ENCODE measurements at regions of chr10 and their contacts with region 1.

Region 1: GRCh38 chr10:60444494-60445064 is 54.9 kb upstream of the ANK3 start:
- DNase-seq: no peak
- ATAC-seq: no peak
- H3K4me3 ChIP-seq: no peak overlapping the region
- H3K27ac ChIP-seq: no peak overlapping the region
- H3K4me1 ChIP-seq: peaks cover 13% of the 10 kb centered on the region
- H3K27me3 ChIP-seq: no peaks in the 10 kb centered on the region
- CTCF ChIP-seq: peak; percentile 72; the same call in 1 of the 2 replicates

Region 2: GRCh38 chr10:58886406-58886805 is 1558.2 kb before region 1 on chr10:
- CTCF ChIA-PET with region 1: no interaction called
- POLR2A ChIA-PET with region 1: no interaction called
- in situ Hi-C with region 1: no loop called
- intact Hi-C with region 1: no loop called
- DNase-seq: no peak
- ATAC-seq: no peak
- H3K4me3 ChIP-seq: no peak overlapping the region
- H3K27ac ChIP-seq: no peak overlapping the region
- H3K4me1 ChIP-seq: no peaks in the 10 kb centered on the region
- H3K27me3 ChIP-seq: no peaks in the 10 kb centered on the region
- CTCF ChIP-seq: no peak

Region 3: GRCh38 chr10:60208676-60209269 is 235.8 kb before region 1 on chr10:
- CTCF ChIA-PET with region 1: interaction called, 11 read pairs
- POLR2A ChIA-PET with region 1: no interaction called
- in situ Hi-C with region 1: no loop called
- intact Hi-C with region 1: no loop called
- DNase-seq: peak; percentile 25
- ATAC-seq: no peak
- H3K4me3 ChIP-seq: no peak overlapping the region
- H3K27ac ChIP-seq: no peak overlapping the region
- H3K4me1 ChIP-seq: no peaks in the 10 kb centered on the region
- H3K27me3 ChIP-seq: peaks cover 3% of the 10 kb centered on the region; the same call in 1 of the 2 replicates
- CTCF ChIP-seq: peak; percentile 76; the same call in 1 of the 2 replicates

Region 4: GRCh38 chr10:60646966-60647796 is 202.6 kb after region 1 on chr10:
- CTCF ChIA-PET with region 1: interaction called, 9 read pairs
- POLR2A ChIA-PET with region 1: no interaction called
- in situ Hi-C with region 1: no loop called
- intact Hi-C with region 1: loop called (anchors 1 kb)
- DNase-seq: peak; percentile 42
- ATAC-seq: peak; percentile 76
- H3K4me3 ChIP-seq: no peak overlapping the region
- H3K27ac ChIP-seq: no peak overlapping the region
- H3K4me1 ChIP-seq: no peaks in the 10 kb centered on the region
- H3K27me3 ChIP-seq: no peaks in the 10 kb centered on the region
- CTCF ChIP-seq: peak; percentile 77; the same call in 1 of the 2 replicates

Region 5: GRCh38 chr10:60769406-60769805 is 324.8 kb after region 1 on chr10:
- CTCF ChIA-PET with region 1: no interaction called
- POLR2A ChIA-PET with region 1: no interaction called
- in situ Hi-C with region 1: no loop called
- intact Hi-C with region 1: loop called (anchors 5 kb)
- DNase-seq: no peak
- ATAC-seq: no peak; the same call in 1 of the 2 replicates
- H3K4me3 ChIP-seq: no peak overlapping the region
- H3K27ac ChIP-seq: no peak overlapping the region
- H3K4me1 ChIP-seq: no peaks in the 10 kb centered on the region
- H3K27me3 ChIP-seq: peaks cover 7% of the 10 kb centered on the region; the same call in 1 of the 2 replicates
- CTCF ChIP-seq: no peak

Measured in Panc1 (cell line).